ENCODE measurements at regions of chr5 and their contacts with region 1.

Region 1: GRCh38 chr5:109316634-109317033 is 93.1 kb downstream of the PJA2 start:
- DNase-seq: no peak
- ATAC-seq: no peak
- H3K4me3 ChIP-seq: no peak overlapping the region
- H3K27ac ChIP-seq: no peak overlapping the region
- H3K4me1 ChIP-seq: peaks cover 0 to 5% (median 0%) of the 10 kb centered on the region in 9 donors
- H3K27me3 ChIP-seq: no peaks in the 10 kb centered on the region
- CTCF ChIP-seq: no peak

Region 2: DNA sequence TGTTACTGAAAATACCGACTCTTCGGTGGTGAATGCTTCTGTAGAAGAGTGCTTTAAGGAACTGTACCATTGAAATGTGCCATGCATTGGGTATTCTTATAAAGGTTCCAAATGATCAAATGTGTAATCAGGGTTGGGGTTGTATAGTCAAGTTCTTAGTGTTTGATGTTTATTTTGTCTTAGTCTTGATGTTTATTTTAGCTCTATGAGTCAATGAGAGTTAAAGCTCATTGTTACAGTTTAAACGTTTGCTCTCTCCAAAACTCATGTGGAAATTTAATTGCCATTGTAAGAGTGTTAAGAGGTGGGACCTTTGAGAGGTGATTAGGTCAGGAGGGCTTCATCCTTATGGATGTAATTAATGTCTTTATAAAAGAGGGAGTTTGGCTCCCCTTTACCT is 416.0 kb before region 1 on chr5:
- intact Hi-C with region 1: loop called in 1 of 10 experiments (anchors 10 kb)
- DNase-seq: no peak
- ATAC-seq: no peak
- H3K4me3 ChIP-seq: no peak overlapping the region
- H3K27ac ChIP-seq: no peak overlapping the region
- H3K4me1 ChIP-seq: no peaks in the 10 kb centered on the region
- H3K27me3 ChIP-seq: no peaks in the 10 kb centered on the region
- CTCF ChIP-seq: no peak